ENCODE measurements at regions of chr6 and their contacts with region 1.

Region 1: GRCh38 chr6:108113557-108114519 is 39.3 kb upstream of the OSTM1 start:
- DNase-seq: no peak
- H3K4me3 ChIP-seq: peak overlapping the region in 1 of 4 donors; percentile 19
- H3K27ac ChIP-seq: no peak overlapping the region
- H3K4me1 ChIP-seq: peaks cover 22 to 49% (median 40%) of the 10 kb centered on the region in 4 donors
- H3K27me3 ChIP-seq: peaks cover 99% of the 10 kb centered on the region
- CTCF ChIP-seq: peak; percentile 46 to 61 (median 48)
- EP300 ChIP-seq: no peak
- POLR2A ChIP-seq: no peak

Region 2: DNA sequence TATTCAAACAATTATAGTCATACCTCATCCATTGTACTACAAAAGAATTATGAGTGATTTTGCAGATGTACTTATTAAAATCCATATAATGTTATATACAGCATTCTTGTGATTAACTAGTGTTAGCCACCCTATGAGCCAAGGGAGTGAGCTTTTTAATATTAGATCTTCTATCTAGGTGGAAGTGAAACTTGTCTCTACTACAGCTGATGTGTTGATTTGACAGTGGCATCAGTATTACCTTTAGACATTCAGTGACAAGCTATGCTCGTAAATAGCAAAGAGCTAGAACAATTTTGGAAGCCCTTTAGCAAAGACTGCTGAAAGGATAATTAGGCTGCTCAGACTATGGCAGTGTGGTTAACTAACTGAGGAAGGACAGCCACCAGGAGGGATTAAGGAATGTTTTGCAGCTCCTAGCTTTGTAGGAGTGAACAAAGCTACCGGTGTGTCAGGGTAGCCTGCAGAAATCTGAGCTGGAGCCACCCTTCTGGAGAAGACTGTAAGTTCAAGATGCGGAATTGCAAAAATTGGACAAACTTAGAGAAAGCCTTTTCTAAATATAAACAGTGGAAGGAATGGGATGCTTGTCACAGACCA is 254.7 kb after region 1 on chr6:
- in situ Hi-C with region 1: no loop called
- intact Hi-C with region 1: no loop called
- DNase-seq: no peak
- H3K4me3 ChIP-seq: no peak overlapping the region
- H3K27ac ChIP-seq: no peak overlapping the region
- H3K4me1 ChIP-seq: no peaks in the 10 kb centered on the region
- H3K27me3 ChIP-seq: no peaks in the 10 kb centered on the region
- CTCF ChIP-seq: no peak
- EP300 ChIP-seq: no peak
- POLR2A ChIP-seq: no peak

Region 3: DNA sequence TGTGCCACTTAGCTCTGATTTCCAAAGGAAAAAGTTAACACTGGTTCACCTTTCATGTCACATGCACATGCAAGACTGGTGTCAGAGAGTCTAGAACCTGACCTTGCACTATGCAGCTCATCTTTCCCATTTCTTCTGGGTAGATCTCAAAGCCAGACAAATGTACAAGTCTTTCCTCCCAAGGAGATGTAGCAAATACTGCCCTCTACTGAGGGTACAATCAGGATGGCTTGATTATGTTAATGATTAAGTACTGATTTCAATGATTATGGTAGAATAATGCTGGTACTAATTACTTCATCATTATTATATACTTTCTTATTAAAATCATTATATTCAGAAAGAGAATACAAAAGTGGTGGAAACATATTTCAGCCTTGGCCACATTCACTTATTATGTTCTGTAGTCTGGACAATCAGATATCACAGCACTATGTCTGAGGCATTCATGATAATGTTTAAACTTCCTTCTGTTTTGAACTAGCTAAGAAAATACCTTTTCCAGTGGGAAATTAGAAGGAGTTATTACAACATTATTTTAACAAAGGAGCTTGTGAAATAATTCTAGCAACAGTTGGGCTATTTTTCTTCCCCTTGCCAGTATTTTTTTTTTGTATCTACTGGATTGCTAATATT is 378.4 kb after region 1 on chr6:
- in situ Hi-C with region 1: loop called in 3 of 4 experiments (anchors 10 to 25 kb)
- intact Hi-C with region 1: loop called (anchors 10 kb)
- DNase-seq: no peak
- H3K4me3 ChIP-seq: no peak overlapping the region
- H3K27ac ChIP-seq: no peak overlapping the region
- H3K4me1 ChIP-seq: no peaks in the 10 kb centered on the region
- H3K27me3 ChIP-seq: no peaks in the 10 kb centered on the region
- CTCF ChIP-seq: peak; percentile 40 to 50 (median 46)
- EP300 ChIP-seq: no peak
- POLR2A ChIP-seq: no peak

Region 4: DNA sequence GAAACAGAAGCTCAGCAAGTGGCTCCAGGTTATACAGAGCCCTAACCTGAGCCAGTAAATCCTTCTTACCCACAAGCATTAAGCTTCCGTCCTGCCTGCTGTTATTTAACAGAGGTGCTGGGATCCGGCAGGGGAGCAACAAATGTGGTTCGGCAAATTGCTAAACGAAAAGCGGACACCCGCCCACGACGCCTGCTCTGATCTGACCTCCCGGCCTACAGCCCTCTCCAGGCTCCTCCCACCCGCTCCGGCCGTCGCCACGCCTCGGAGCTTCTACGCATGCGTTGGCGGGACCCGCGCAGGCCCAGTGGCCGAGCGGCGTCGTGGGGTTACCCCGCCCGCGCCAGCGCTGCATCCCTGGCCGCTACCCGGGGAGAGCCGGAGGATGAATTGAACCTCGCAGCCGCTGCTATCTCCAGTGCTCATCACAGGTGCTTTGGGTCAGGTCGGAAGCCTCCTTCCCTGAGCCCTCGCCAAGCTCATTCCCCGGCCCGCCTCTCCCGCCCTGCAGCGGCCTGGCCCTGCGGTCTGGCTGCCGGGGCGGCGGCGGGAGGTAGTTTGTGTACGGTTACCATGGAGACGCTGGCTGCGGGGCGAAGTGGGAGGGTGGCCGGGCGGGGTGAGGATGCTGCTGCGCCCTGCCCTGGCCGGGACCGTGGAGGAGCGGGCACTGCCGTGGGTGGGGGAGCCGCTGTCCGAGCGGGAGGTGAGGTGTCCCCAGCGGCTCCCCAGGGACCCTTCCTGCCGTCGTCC is 734.5 kb after region 1 on chr6 and contains the start of gene ARMC2:
- in situ Hi-C with region 1: no loop called
- intact Hi-C with region 1: no loop called
- DNase-seq: peak; percentile 95
- H3K4me3 ChIP-seq: peak within 1 kb of the TSS; percentile 36 to 57 (median 52)
- H3K27ac ChIP-seq: peak within 1 kb of the TSS; percentile 65 to 84 (median 80)
- H3K4me1 ChIP-seq: peaks cover 0 to 22% (median 15%) of the 10 kb centered on the region in 4 donors
- H3K27me3 ChIP-seq: no peaks in the 10 kb centered on the region
- CTCF ChIP-seq: no peak
- EP300 ChIP-seq: no peak
- POLR2A ChIP-seq: peak; percentile 62
- total RNA-seq, gene ARMC2: 2.0 to 7.5 (median 3.0) TPM